GM10248 (cell line): ENCODE measurements at regions of chr3 and their contacts with region 1.

Region 1: GRCh38 chr3:124905849-124906248 is 18.7 kb upstream of the ITGB5 start:
- DNase-seq: no peak
- CTCF ChIP-seq: no peak

Region 2: DNA sequence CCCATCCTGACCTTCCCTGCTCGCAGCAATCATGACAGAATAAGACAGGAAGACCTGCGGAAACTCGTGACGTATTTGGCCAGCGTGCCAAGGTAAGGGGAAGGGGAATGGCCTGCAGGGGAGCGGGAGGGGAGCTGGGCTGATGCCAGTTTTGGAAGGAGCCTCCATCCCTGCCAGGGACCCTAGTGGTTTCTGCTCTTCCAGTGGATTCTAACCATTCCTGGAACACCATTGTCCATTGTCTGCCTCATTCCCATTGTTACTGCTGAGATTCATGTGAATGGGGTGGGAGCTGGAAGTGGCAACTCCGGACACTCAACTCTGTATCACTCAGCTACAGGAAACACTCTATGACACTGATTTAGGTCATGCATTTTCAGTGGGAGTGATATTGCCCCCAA is 671.0 kb before region 1 on chr3:
- CTCF ChIA-PET with region 1: no interaction called
- POLR2A ChIA-PET with region 1: no interaction called
- DNase-seq: no peak
- CTCF ChIP-seq: no peak

Region 3: DNA sequence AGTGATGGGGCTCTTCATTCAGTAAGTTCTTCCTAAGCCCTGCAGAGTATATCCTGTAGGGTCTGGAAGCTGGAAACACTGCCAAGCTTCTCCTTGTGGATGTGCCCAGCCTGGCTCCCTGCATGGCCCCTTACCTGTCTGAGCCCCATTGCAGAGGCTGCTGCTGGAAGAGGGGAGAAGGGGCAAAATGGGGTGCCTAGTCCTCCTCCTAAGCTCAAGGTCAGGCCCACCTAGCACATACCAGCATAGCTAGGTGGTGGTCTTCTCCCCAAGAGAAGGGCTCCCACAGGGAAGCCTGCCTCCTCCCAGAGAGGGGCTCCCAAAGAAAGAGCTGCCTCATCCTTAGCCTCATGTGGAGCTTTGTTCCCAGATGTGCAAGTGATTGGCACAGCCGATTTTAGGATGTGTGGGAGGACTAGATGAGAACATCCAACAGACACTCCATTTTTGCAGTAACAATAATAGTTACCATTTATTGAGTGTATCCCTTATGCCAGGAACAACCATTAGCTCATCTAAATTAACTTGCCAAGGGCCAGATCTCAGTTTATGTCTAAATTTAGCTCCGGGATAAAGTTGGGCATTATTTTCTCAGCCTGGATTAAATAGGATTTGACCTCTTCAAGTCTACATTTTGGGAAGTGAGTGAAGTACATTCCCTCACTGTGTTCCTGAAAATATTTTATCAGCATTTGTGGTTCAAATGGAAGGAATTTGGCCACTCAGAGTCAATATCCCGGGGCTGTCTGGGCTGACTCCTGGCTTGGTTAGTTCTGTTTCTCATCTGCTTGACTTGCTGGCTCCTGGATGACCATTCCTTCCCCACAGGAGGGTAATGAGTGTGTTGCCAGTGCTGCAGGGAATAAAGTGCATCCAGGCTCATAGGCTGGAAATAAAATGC is 622.8 kb before region 1 on chr3:
- CTCF ChIA-PET with region 1: no interaction called
- POLR2A ChIA-PET with region 1: no interaction called
- DNase-seq: no peak
- CTCF ChIP-seq: no peak

Region 4: GRCh38 chr3:124559881-124560574 is 345.8 kb before region 1 on chr3:
- CTCF ChIA-PET with region 1: interaction called, 12 read pairs
- POLR2A ChIA-PET with region 1: no interaction called
- DNase-seq: peak; percentile 77
- CTCF ChIP-seq: peak; percentile 86

Region 5: GRCh38 chr3:124639406-124640237 is 266.2 kb before region 1 on chr3:
- CTCF ChIA-PET with region 1: no interaction called
- POLR2A ChIA-PET with region 1: no interaction called
- DNase-seq: no peak
- CTCF ChIP-seq: no peak

Region 6: DNA sequence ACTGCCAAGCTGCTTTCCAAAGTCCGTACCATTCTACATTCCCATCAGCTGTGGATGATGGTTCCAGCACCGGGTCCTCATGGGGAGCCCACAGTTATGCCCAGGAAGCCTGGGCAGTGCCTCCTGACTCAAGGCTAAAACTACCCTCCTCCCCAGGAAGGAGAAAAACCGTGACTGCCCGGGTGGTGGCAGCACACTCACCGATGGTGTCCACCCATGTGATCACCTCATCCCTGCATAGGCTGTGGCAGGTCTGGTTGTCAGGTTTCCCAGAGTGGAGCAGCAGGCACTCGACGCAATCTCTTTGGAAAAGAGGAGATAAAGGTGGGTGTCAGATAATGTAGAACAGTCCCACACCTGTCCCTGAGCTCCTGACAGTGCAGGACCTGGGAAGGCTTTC is 137.0 kb before region 1 on chr3:
- CTCF ChIA-PET with region 1: interaction called, 215 read pairs
- POLR2A ChIA-PET with region 1: no interaction called
- DNase-seq: peak; percentile 74
- CTCF ChIP-seq: peak; percentile 64

Region 7: GRCh38 chr3:124786441-124787241 is 119.2 kb before region 1 on chr3:
- CTCF ChIA-PET with region 1: interaction called, 42 read pairs
- POLR2A ChIA-PET with region 1: no interaction called
- DNase-seq: no peak
- CTCF ChIP-seq: no peak

Region 8: DNA sequence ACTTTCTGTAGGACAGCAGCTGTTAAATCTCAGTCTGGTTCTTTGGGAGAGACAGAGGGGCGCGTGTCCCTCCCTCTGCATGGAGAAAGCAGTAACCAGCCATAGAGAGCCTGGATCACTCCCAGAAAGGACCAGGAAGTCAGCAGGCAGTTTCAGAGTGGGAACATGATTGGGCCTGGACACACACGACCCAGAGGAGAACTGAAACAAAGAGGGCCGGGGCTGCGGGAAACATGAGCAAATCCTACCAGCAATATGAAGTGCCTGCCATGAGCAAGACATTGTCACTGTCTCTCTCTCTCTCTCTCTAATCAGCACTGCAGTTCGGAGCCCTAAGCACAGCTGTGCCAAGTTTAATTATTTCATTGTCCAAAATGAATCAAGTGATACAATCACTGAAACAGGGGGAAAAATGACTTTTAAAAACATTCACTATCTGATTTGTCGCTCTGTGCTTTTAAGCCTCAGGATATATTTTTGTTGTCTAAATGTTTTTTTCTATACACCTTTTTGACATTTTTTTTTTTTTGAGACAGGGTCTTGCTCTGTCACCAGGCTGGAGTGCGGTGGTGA is 11.1 kb after region 1 on chr3:
- CTCF ChIA-PET with region 1: interaction called, 12 read pairs
- POLR2A ChIA-PET with region 1: no interaction called
- DNase-seq: no peak
- CTCF ChIP-seq: no peak

Region 9: DNA sequence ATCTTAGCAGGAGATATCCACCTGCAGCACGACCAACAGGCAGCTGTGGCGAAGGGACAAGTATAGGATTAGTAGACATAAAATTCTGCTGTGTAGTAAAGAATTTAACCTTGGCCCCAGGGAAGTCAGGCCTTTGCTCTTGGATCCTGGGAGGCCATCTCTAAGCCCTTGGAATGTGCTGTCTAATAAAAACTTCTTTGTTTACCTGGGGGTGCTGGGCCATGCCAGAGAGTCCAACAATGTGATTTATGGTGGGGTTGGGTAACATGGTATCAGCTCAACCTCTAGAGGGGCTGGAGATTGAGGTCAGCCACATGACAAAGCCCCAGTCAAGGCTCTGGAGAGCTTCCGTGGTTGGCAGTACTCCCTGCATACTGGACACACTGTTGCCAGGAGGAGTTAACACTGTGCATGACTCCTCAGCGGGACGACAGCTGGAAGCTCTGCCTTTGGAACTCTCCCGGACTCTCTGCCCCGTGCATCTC is 97.6 kb after region 1 on chr3:
- CTCF ChIA-PET with region 1: no interaction called
- POLR2A ChIA-PET with region 1: no interaction called
- DNase-seq: no peak
- CTCF ChIP-seq: no peak